A549 (cell line): ENCODE measurements at regions of chr18 and their contacts with region 1.

Region 1: GRCh38 chr18:4106407-4107033 is 348.6 kb downstream of the DLGAP1 start:
- DNase-seq: peak; percentile 3 to 62
- ATAC-seq: peak; percentile 71 to 80
- H3K4me3 ChIP-seq: no peak overlapping the region
- H3K27ac ChIP-seq: no peak overlapping the region
- H3K4me1 ChIP-seq: no peaks in the 10 kb centered on the region
- CTCF ChIP-seq: peak; percentile 51
- EP300 ChIP-seq: no peak
- POLR2A ChIP-seq: no peak
- RAD21 ChIP-seq: peak; percentile 47 to 60

Region 2: DNA sequence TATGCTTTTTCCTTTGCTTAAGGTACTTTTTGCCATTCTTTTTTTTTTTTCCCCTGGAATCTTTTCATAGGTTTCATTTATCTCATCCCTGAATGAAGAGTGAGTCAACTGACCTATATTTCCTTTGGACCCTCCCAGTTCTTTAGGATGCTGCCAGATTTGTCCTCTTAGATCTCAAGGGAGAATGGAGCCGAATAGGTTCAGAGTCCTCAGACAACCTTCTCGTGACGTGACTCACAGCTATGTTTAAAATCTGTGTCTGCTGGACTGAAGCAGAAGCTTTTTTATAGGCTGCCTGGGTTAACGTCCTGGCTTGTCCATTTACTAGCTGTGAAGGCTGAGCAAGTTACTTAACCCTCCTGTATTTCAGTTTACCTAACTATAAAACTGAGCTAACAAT is 10.0 kb before region 1 on chr18:
- CTCF ChIA-PET with region 1: interaction called, 25 read pairs
- POLR2A ChIA-PET with region 1: no interaction called
- DNase-seq: peak in 1 of 2 experiments; percentile 21
- ATAC-seq: no peak; a peak in 1 of 6 replicates
- H3K4me3 ChIP-seq: no peak overlapping the region
- H3K27ac ChIP-seq: no peak overlapping the region
- H3K4me1 ChIP-seq: no peaks in the 10 kb centered on the region
- CTCF ChIP-seq: no peak
- EP300 ChIP-seq: no peak
- POLR2A ChIP-seq: no peak
- RAD21 ChIP-seq: no peak

Region 3: DNA sequence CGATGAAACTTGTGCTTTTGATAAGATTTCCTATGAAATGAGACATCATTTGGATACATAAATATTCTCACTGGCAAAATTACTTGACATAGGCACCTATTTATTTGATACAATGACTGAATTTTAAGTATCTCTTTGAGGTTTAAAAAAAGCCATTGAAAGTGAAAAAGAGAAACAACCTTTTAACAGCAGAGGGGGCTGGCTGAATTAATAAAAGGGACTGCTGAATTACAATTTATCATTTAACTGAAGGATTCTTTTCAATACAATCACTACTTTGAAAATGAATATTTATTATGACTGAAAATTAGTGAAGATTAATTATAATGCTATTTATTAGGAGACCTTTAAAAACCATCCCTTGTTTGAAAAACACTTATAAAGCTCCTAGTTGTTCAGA is 13.3 kb after region 1 on chr18:
- CTCF ChIA-PET with region 1: interaction called, 32 read pairs
- POLR2A ChIA-PET with region 1: no interaction called
- DNase-seq: no peak
- ATAC-seq: no peak
- H3K4me3 ChIP-seq: no peak overlapping the region
- H3K27ac ChIP-seq: no peak overlapping the region
- H3K4me1 ChIP-seq: no peaks in the 10 kb centered on the region
- CTCF ChIP-seq: no peak
- EP300 ChIP-seq: no peak
- POLR2A ChIP-seq: no peak
- RAD21 ChIP-seq: no peak

Region 4: DNA sequence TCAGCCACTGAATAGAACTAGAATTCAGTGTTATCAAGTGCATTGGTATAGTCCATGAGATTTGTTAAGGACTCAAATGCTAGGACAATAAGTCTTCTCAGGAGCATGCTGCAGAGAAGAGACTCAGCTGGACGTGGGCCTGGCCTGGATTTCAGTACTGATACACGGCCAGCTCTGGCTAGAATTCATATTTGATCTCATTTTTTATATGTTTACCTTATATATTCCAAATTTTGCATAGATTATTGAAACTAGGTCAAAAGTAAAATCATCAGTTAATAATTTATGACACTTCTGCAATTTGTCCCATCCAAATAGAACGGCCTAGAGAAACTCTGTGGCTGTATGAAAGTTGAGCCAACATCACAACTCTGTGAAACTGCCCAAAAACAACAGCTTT is 86.6 kb after region 1 on chr18:
- CTCF ChIA-PET with region 1: no interaction called
- POLR2A ChIA-PET with region 1: no interaction called
- DNase-seq: no peak
- ATAC-seq: no peak
- H3K4me3 ChIP-seq: no peak overlapping the region
- H3K27ac ChIP-seq: no peak overlapping the region
- H3K4me1 ChIP-seq: no peaks in the 10 kb centered on the region
- CTCF ChIP-seq: no peak
- EP300 ChIP-seq: no peak
- POLR2A ChIP-seq: no peak
- RAD21 ChIP-seq: no peak

Region 5: GRCh38 chr18:4251873-4252272 is 145.4 kb after region 1 on chr18:
- CTCF ChIA-PET with region 1: no interaction called
- POLR2A ChIA-PET with region 1: no interaction called
- DNase-seq: no peak
- ATAC-seq: no peak
- H3K4me3 ChIP-seq: no peak overlapping the region
- H3K27ac ChIP-seq: no peak overlapping the region
- H3K4me1 ChIP-seq: no peaks in the 10 kb centered on the region
- CTCF ChIP-seq: no peak
- EP300 ChIP-seq: no peak
- POLR2A ChIP-seq: no peak
- RAD21 ChIP-seq: no peak

Region 6: GRCh38 chr18:5057386-5058348 is 951.1 kb after region 1 on chr18:
- CTCF ChIA-PET with region 1: interaction called, 40 read pairs
- POLR2A ChIA-PET with region 1: no interaction called
- DNase-seq: peak; percentile 21 to 50
- ATAC-seq: peak; percentile 77 to 78
- H3K4me3 ChIP-seq: no peak overlapping the region
- H3K27ac ChIP-seq: no peak overlapping the region
- H3K4me1 ChIP-seq: no peaks in the 10 kb centered on the region
- CTCF ChIP-seq: peak; percentile 55
- EP300 ChIP-seq: no peak
- POLR2A ChIP-seq: no peak
- RAD21 ChIP-seq: peak; percentile 69 to 76